Mammary epithelial cell (primary cell): ENCODE measurements at regions of chr18 and their contacts with region 1.

Region 1: GRCh38 chr18:75562216-75562615 is 134.7 kb upstream of the SMIM21 start:
- DNase-seq: no peak
- H3K4me3 ChIP-seq: no peak overlapping the region
- H3K27ac ChIP-seq: no peak overlapping the region
- H3K4me1 ChIP-seq: no peaks in the 10 kb centered on the region
- H3K27me3 ChIP-seq: no peaks in the 10 kb centered on the region
- CTCF ChIP-seq: no peak

Region 2: GRCh38 chr18:75408554-75409506 is 153.4 kb before region 1 on chr18:
- CTCF ChIA-PET with region 1: no interaction called
- dilution Hi-C with region 1: no loop called
- in situ Hi-C with region 1: no loop called
- intact Hi-C with region 1: no loop called
- DNase-seq: peak; percentile 100
- H3K4me3 ChIP-seq: no peak overlapping the region
- H3K27ac ChIP-seq: peak overlapping the region; percentile 76
- H3K4me1 ChIP-seq: peaks cover 29% of the 10 kb centered on the region
- H3K27me3 ChIP-seq: no peaks in the 10 kb centered on the region
- CTCF ChIP-seq: no peak

Region 3: GRCh38 chr18:75607701-75608100 is 45.5 kb after region 1 on chr18:
- CTCF ChIA-PET with region 1: no interaction called
- dilution Hi-C with region 1: no loop called
- in situ Hi-C with region 1: no loop called
- intact Hi-C with region 1: loop called (anchors 1 kb)
- DNase-seq: no peak
- H3K4me3 ChIP-seq: no peak overlapping the region
- H3K27ac ChIP-seq: no peak overlapping the region
- H3K4me1 ChIP-seq: no peaks in the 10 kb centered on the region
- H3K27me3 ChIP-seq: no peaks in the 10 kb centered on the region
- CTCF ChIP-seq: no peak

Region 4: GRCh38 chr18:75638776-75639471 is 76.7 kb after region 1 on chr18:
- CTCF ChIA-PET with region 1: no interaction called
- dilution Hi-C with region 1: no loop called
- in situ Hi-C with region 1: no loop called
- intact Hi-C with region 1: no loop called
- DNase-seq: no peak
- H3K4me3 ChIP-seq: no peak overlapping the region
- H3K27ac ChIP-seq: no peak overlapping the region
- H3K4me1 ChIP-seq: no peaks in the 10 kb centered on the region
- H3K27me3 ChIP-seq: no peaks in the 10 kb centered on the region
- CTCF ChIP-seq: no peak